Endothelial cell of umbilical vein (primary cell): ENCODE measurements at regions of chr4 and their contacts with region 1.

Region 1: DNA sequence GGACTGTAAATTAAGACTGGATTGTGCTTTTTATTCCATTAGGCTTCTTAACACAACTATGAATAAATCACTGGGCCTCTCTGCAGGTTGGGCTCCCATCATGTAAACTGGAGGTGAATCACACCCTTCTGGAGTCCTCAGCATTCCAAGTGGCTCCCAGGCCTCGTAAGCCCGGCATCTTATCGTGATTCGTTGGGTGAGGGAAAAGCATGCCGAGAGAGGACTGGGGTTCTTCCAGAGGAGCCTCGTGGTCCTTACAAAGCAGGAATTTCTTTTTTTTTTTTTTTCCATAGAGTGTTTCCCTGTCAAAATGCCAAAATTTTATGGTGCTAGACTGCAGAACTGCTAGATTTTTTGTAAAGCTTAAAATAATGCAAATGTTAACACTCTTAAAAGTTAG is 20.0 kb downstream of the CLDN22 start:
- DNase-seq: peak; percentile 36
- H3K4me3 ChIP-seq: no peak overlapping the region
- H3K27ac ChIP-seq: peak overlapping the region; percentile 42
- H3K4me1 ChIP-seq: peaks cover 19% of the 10 kb centered on the region
- H3K27me3 ChIP-seq: no peaks in the 10 kb centered on the region
- CTCF ChIP-seq: no peak
- POLR2A ChIP-seq: no peak

Region 2: GRCh38 chr4:183407128-183407585 is 107.1 kb after region 1 on chr4:
- CTCF ChIA-PET with region 1: interaction called, 11 read pairs
- POLR2A ChIA-PET with region 1: no interaction called
- dilution Hi-C with region 1: no loop called
- intact Hi-C with region 1: no loop called
- DNase-seq: peak; percentile 90
- H3K4me3 ChIP-seq: peak overlapping the region; percentile 28 to 70 (median 33)
- H3K27ac ChIP-seq: peak overlapping the region; percentile 39
- H3K4me1 ChIP-seq: peaks cover 7% of the 10 kb centered on the region
- H3K27me3 ChIP-seq: no peaks in the 10 kb centered on the region
- CTCF ChIP-seq: peak; percentile 91 to 96
- POLR2A ChIP-seq: no peak